ENCODE measurements at regions of chr10 and their contacts with region 1.

Region 1: DNA sequence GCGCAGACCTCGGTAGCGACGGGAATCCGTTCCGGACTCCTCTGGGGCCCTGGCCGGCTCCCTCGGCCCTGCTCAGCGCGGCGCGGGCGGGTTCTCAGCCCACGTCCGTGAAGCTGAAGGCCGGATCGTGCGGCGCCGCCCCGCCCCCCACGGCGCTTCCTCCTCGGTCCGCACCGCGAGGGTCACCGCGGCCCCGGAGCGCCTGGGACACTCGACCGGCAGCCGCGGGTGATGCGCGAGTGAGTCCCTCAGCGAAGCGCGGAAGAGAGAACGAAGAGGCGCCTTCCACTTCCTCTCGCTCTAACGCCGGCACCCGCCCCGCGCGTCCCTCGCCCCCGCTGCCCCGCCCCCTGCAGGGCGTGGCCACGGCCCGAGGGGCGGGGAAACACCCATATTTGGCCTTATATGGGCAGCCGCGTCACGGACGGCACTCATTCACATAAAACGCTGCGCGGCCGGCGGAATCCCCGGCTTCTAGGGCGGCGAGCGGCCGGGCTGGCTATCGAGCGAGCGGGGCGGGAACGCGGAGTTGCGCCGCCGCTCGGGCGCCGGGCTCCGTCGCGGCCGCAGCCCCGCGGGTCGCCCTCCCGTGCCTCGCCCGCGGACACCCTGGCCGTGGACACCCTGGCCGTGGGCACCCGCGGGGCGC is at the start of gene DUSP5:
- DNase-seq: peak; percentile 90
- H3K4me3 Mint-ChIP-seq: peak within 1 kb of the TSS; percentile 77
- H3K27ac Mint-ChIP-seq: peak within 1 kb of the TSS; percentile 94
- H3K4me1 Mint-ChIP-seq: peaks cover 15% of the 10 kb centered on the region
- H3K27me3 Mint-ChIP-seq: no peaks in the 10 kb centered on the region
- CTCF ChIP-seq: no peak
- total RNA-seq, gene DUSP5: 34.0 and 55.8 TPM in 2 replicates

Region 2: GRCh38 chr10:110311357-110311949 is 186.1 kb before region 1 on chr10:
- CTCF ChIA-PET with region 1: no interaction called
- intact Hi-C with region 1: loop called (anchors 1 kb)
- DNase-seq: peak; percentile 33
- H3K4me3 Mint-ChIP-seq: no peak overlapping the region
- H3K27ac Mint-ChIP-seq: no peak overlapping the region
- H3K4me1 Mint-ChIP-seq: no peaks in the 10 kb centered on the region
- H3K27me3 Mint-ChIP-seq: no peaks in the 10 kb centered on the region
- CTCF ChIP-seq: no peak

Region 3: GRCh38 chr10:110326351-110327032 is 171.1 kb before region 1 on chr10:
- CTCF ChIA-PET with region 1: no interaction called
- intact Hi-C with region 1: loop called (anchors 5 kb)
- DNase-seq: no peak
- H3K4me3 Mint-ChIP-seq: peak overlapping the region; percentile 50
- H3K27ac Mint-ChIP-seq: peak overlapping the region; percentile 92
- H3K4me1 Mint-ChIP-seq: peaks cover 41% of the 10 kb centered on the region
- H3K27me3 Mint-ChIP-seq: no peaks in the 10 kb centered on the region
- CTCF ChIP-seq: no peak

Region 4: DNA sequence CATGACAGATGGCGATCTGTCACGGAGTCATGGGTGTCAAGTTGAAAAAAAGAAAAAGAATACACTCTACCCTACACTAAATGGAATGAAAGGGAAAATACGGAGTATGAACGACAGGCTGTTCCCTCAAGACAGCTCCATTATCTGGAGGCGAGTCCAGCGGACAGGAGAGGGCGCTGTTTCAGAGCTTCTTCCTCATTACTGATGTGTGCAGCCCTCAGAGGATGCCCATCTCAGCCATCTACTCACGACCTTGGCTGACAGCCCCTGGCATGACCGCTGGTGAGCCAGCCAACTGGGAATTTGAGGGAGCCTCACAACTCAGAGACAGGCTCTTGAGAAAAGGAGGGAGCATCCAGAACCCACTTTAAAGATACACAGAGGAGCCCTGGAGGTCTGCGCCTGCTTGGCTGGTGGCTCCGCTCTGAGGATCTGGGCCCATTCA is 143.2 kb before region 1 on chr10:
- CTCF ChIA-PET with region 1: interaction called, 6 read pairs
- intact Hi-C with region 1: loop called (anchors 2 kb)
- DNase-seq: peak; percentile 72
- H3K4me3 Mint-ChIP-seq: no peak overlapping the region
- H3K27ac Mint-ChIP-seq: no peak overlapping the region
- H3K4me1 Mint-ChIP-seq: peaks cover 33% of the 10 kb centered on the region
- H3K27me3 Mint-ChIP-seq: no peaks in the 10 kb centered on the region
- CTCF ChIP-seq: peak; percentile 33

Region 5: GRCh38 chr10:110395725-110396651 is 101.6 kb before region 1 on chr10:
- CTCF ChIA-PET with region 1: interaction called, 3 read pairs
- intact Hi-C with region 1: loop called (anchors 1 kb)
- DNase-seq: peak; percentile 75
- H3K4me3 Mint-ChIP-seq: peak overlapping the region; percentile 39
- H3K27ac Mint-ChIP-seq: peak overlapping the region; percentile 98
- H3K4me1 Mint-ChIP-seq: peaks cover 59% of the 10 kb centered on the region
- H3K27me3 Mint-ChIP-seq: no peaks in the 10 kb centered on the region
- CTCF ChIP-seq: no peak

Region 6: DNA sequence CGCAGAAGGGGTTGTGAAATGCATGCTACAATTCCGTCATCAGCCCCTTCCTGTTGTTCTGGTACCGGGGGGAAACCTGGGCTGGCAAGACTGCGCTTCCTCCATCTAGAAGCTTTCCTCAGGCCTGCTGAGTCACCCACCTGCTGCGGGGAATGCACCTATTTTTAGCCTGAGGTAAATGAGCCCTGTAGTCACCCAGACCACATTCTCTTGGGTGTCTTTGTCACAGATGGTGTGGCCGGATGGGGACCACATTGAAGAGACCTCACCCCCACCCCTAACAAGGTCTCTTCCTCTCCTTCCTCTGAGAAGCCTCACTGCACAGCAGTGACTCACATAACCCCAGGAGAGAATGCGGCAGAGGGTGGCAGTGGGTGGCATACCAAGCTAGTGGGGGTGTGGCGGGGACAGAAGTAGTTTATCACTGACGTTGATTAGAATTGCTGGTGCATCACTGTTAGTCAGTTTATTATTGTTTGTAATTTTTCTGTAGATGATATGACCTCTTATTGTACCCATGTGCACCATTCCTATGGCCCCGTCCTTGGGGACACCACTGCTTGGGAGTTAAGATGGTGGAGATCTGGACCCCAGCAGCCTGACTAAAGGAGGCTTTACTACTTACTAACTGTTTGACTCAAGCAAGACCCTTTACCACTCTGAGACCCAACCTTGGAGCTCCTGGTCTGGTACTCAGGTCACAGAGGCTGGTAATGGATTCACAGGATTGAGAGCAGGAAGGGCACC is 82.8 kb before region 1 on chr10:
- CTCF ChIA-PET with region 1: interaction called, 3 read pairs
- intact Hi-C with region 1: loop called (anchors 1 kb)
- DNase-seq: peak; percentile 84
- H3K4me3 Mint-ChIP-seq: peak overlapping the region; percentile 36
- H3K27ac Mint-ChIP-seq: peak overlapping the region; percentile 96
- H3K4me1 Mint-ChIP-seq: peaks cover 67% of the 10 kb centered on the region
- H3K27me3 Mint-ChIP-seq: no peaks in the 10 kb centered on the region
- CTCF ChIP-seq: no peak

Region 7: DNA sequence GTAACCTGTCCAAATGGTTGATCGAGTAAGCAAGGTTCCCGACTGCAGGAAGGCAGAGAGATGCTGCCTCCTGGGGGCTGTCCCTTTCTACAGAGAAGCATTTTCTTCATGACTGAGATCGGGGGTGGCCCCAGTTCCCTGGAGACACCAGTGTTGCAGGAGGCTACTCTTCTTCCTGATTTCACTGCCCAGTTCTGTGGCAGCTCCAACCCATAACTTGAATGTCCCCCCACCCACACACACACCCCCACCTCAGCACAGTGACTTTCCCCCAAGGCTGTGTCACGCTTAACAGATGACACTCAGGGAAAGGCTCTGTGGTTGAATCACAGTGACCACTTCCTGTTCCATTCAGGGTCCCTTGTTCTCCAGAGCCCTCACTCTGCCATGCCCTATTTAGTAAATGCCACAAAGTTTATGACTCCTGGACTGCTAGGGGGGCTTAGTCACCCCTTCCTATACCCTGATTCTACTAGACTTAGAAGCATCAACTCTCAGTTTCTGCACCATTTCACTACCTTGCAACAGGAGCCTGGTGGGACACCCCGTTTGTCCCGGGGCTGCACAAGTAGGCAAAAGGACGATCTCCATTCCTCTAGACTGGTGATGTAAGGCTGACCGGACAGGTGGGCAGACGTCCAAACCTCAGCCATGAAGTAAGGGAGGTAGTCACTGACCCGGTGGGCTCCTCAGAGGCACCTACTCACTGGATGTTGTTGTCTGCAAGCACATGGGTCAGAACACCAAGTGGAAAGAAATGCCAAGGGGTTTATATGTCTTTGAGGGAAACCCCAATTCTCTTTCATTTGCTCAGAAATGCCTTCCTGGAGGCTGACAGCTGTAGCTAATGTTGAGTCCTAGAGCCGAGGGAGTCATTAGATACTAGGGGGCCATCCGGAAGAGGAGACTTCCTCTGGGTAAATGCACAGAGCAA is 38.7 kb after region 1 on chr10:
- CTCF ChIA-PET with region 1: no interaction called
- intact Hi-C with region 1: loop called (anchors 5 kb)
- DNase-seq: peak; percentile 33
- H3K4me3 Mint-ChIP-seq: no peak overlapping the region
- H3K27ac Mint-ChIP-seq: peak overlapping the region; percentile 39
- H3K4me1 Mint-ChIP-seq: peaks cover 8% of the 10 kb centered on the region
- H3K27me3 Mint-ChIP-seq: no peaks in the 10 kb centered on the region
- CTCF ChIP-seq: no peak

Region 8: GRCh38 chr10:110576220-110576619 is 78.7 kb after region 1 on chr10:
- CTCF ChIA-PET with region 1: no interaction called
- intact Hi-C with region 1: no loop called
- DNase-seq: no peak
- H3K4me3 Mint-ChIP-seq: no peak overlapping the region
- H3K27ac Mint-ChIP-seq: no peak overlapping the region
- H3K4me1 Mint-ChIP-seq: peaks cover 6% of the 10 kb centered on the region
- H3K27me3 Mint-ChIP-seq: no peaks in the 10 kb centered on the region
- CTCF ChIP-seq: no peak